IMR-90 (cell line): ENCODE measurements at regions of chr12 and their contacts with region 1.

Region 1: DNA sequence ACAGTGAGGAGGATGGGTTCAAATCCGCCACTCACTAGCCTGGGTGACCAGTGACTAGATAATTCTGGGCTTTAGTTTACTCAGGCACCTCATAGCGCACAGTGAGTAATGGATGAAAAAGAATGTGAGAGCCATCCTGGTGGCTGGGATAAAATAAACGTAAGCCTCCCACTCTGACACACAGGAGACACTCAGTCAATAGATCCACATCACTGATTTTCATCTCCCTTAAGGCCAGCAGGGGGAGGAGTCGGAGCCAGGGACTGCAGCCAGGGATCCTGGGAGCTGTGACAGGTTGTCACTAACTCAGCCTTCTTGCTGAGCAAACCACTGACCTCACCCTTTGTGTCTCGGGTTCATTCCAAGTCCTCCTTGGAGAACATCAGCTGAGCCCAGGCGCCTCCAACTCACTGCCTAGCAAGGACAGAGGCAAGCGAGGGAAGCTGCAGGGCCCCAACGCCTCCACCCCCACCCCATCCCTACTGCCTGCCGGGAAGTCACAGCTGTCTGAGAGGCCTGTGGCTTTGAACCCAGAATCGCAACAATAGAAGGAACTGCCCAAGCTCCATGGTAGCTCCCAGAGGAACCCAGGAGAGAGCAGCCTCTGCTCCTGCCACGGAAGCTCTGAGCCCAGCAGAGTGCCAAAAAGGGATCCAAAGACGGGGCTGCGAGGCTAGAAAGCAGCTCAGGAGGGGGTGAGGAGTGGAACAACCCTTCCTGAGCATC is 30.7 kb downstream of the PXN start:
- DNase-seq: peak; percentile 97
- ATAC-seq: peak; percentile 52
- H3K4me3 ChIP-seq: no peak overlapping the region
- H3K27ac ChIP-seq: peak overlapping the region; percentile 92
- H3K4me1 ChIP-seq: peaks cover 70% of the 10 kb centered on the region
- H3K27me3 ChIP-seq: no peaks in the 10 kb centered on the region
- CTCF ChIP-seq: peak; percentile 63
- POLR2A ChIP-seq: no peak; the same call in 1 of the 2 replicates
- RAD21 ChIP-seq: peak; percentile 60

Region 2: DNA sequence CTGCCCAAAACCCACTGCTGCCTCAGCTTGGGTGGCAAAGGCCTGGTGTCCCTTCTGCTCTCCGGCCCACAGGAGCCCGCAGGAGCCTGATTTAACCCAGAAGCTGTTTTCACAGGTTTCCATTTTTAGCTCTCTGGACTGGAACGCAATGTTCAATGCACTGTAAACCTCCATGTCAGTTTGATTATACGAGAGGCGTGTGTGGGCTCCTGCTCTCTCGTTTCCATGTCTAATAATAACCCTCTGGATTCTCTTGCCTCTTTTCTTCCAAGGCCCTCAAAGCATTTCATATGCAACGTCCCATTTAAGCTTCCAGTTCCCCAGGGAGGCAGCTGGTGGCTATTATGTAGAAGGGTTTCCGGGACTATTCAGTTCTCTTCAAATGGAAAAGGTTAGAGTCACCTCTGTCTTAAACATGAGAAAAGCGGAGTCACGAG is 1697.3 kb before region 1 on chr12:
- CTCF ChIA-PET with region 1: no interaction called
- POLR2A ChIA-PET with region 1: no interaction called
- dilution Hi-C with region 1: no loop called
- in situ Hi-C with region 1: no loop called
- intact Hi-C with region 1: no loop called
- DNase-seq: no peak
- ATAC-seq: no peak
- H3K4me3 ChIP-seq: no peak overlapping the region
- H3K27ac ChIP-seq: no peak overlapping the region
- H3K4me1 ChIP-seq: no peaks in the 10 kb centered on the region
- H3K27me3 ChIP-seq: no peaks in the 10 kb centered on the region
- CTCF ChIP-seq: no peak
- POLR2A ChIP-seq: no peak
- RAD21 ChIP-seq: no peak

Region 3: DNA sequence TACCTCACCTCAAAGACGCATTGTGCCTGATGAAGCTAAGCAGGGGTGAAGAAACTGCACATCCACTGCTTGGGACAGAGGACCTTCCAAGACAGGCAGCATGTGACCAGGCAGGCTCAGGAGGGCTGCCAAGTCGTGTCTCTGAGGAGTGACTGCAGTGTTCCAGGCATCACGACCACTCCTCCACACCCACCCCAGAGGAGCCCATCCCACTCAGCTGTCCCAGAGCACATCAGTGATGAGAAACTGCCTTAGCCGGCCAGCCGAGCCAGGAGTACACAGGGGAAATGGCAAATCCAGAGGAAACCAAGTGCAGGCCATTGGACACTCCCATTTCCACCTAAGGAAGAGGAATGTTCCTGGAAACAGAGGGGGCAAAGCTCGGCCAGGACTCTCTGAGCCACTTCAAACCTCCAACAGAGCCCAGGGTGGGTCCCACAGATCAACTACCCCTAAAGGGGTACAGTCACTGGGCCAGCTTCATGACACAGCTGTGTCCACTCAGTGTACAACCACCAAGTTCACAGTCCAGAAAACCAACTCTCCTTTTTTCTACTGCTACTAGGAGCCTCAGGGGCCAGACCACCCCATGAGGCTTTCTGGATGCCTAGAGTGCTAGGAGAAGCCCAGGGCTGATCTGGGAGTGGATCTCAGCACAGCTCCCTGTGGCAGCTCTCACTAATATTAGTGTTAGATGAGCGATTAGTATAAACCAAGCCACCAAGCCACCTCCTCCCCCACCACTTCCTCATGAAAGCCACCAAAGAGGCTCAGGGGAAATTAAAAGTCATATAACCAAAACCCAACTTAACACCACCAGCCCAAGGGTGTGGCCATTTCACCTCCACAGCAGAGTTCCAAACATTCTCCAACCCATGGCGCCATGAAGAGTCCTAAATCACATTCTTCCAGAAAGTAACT is 15.3 kb after region 1 on chr12:
- CTCF ChIA-PET with region 1: interaction called, 8 read pairs
- POLR2A ChIA-PET with region 1: interaction called, 5 read pairs
- dilution Hi-C with region 1: no loop called
- in situ Hi-C with region 1: no loop called
- intact Hi-C with region 1: loop called (anchors 2 kb)
- DNase-seq: no peak
- ATAC-seq: peak; percentile 31
- H3K4me3 ChIP-seq: no peak overlapping the region
- H3K27ac ChIP-seq: peak overlapping the region; percentile 45
- H3K4me1 ChIP-seq: peaks cover 34% of the 10 kb centered on the region
- H3K27me3 ChIP-seq: no peaks in the 10 kb centered on the region
- CTCF ChIP-seq: no peak
- POLR2A ChIP-seq: no peak
- RAD21 ChIP-seq: no peak

Region 4: GRCh38 chr12:120614873-120615272 is 380.1 kb after region 1 on chr12:
- CTCF ChIA-PET with region 1: no interaction called
- POLR2A ChIA-PET with region 1: no interaction called
- dilution Hi-C with region 1: no loop called
- in situ Hi-C with region 1: no loop called
- intact Hi-C with region 1: no loop called
- DNase-seq: no peak
- ATAC-seq: no peak
- H3K4me3 ChIP-seq: no peak overlapping the region
- H3K27ac ChIP-seq: no peak overlapping the region
- H3K4me1 ChIP-seq: no peaks in the 10 kb centered on the region
- H3K27me3 ChIP-seq: peaks cover 34% of the 10 kb centered on the region
- CTCF ChIP-seq: no peak
- POLR2A ChIP-seq: no peak
- RAD21 ChIP-seq: no peak